Esophagus muscularis mucosa (tissue), 4 donors: ENCODE measurements at regions of chr15 and their contacts with region 1.

Region 1: DNA sequence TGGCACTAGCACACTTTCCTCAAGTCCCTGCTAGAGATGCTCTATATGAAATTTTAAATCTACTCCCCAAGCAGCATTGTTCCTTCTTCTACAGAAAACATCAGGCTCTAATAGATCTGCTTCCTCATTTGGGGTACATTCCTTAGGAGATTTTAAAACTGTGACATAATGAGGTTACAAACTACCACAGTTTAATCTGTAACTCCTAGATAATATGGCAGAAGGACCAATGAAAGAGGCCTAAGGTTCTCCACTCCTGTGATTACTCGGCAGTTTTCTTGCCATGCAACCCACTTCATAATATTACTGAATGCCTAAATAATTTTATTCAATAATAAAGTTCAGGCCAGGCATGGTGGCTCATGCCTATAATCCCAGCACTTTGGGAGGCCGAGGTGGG is 16.1 kb downstream of the ZNF106 start:
- DNase-seq: no peak
- H3K4me3 ChIP-seq: no peak overlapping the region
- H3K27ac ChIP-seq: peak overlapping the region; percentile 15 to 53 (median 44)
- H3K4me1 ChIP-seq: peaks cover 7 to 39% (median 33%) of the 10 kb centered on the region in 4 donors
- H3K27me3 ChIP-seq: no peaks in the 10 kb centered on the region
- CTCF ChIP-seq: no peak
- EP300 ChIP-seq: no peak
- POLR2A ChIP-seq: no peak

Region 2: GRCh38 chr15:42273102-42273899 is 201.5 kb before region 1 on chr15 and contains the starts of genes GANC and TMEM87A:
- intact Hi-C with region 1: loop called (anchors 10 kb)
- DNase-seq: peak; percentile 99
- H3K4me3 ChIP-seq: peak within 1 kb of the TSS; percentile 69 to 83 (median 72)
- H3K27ac ChIP-seq: peak within 1 kb of the TSS; percentile 95 to 98 (median 96)
- H3K4me1 ChIP-seq: peaks cover 45 to 66% (median 58%) of the 10 kb centered on the region in 4 donors
- H3K27me3 ChIP-seq: no peaks in the 10 kb centered on the region
- CTCF ChIP-seq: peak in 1 of 3 experiments; percentile 3
- EP300 ChIP-seq: peak; percentile 10
- POLR2A ChIP-seq: peak; percentile 74
- total RNA-seq, gene GANC: 12.2 to 22.7 (median 17.7) TPM
- total RNA-seq, gene TMEM87A: 40.7 to 57.5 (median 47.7) TPM

Region 3: GRCh38 chr15:42457445-42458442 is 17.1 kb before region 1 on chr15:
- intact Hi-C with region 1: loop called (anchors 2 kb)
- DNase-seq: peak; percentile 93
- H3K4me3 ChIP-seq: peak overlapping the region; percentile 39 to 60 (median 51)
- H3K27ac ChIP-seq: peak overlapping the region; percentile 83 to 89 (median 86)
- H3K4me1 ChIP-seq: peaks cover 16 to 58% (median 51%) of the 10 kb centered on the region in 4 donors
- H3K27me3 ChIP-seq: no peaks in the 10 kb centered on the region
- CTCF ChIP-seq: no peak
- EP300 ChIP-seq: peak; percentile 22
- POLR2A ChIP-seq: peak; percentile 6

Region 4: GRCh38 chr15:42591238-42591934 is 116.6 kb after region 1 on chr15:
- intact Hi-C with region 1: no loop called
- DNase-seq: no peak
- H3K4me3 ChIP-seq: no peak overlapping the region
- H3K27ac ChIP-seq: peak overlapping the region in 3 of 4 donors; percentile 39 to 77 (median 76)
- H3K4me1 ChIP-seq: peaks cover 24 to 84% (median 72%) of the 10 kb centered on the region in 4 donors
- H3K27me3 ChIP-seq: no peaks in the 10 kb centered on the region
- CTCF ChIP-seq: peak; percentile 7 to 44 (median 15)
- EP300 ChIP-seq: no peak
- POLR2A ChIP-seq: no peak